WTC11 (cell line): ENCODE measurements at regions of chr19 and their contacts with region 1.

Region 1: GRCh38 chr19:12495002-12495802 is 10.6 kb upstream of the ZNF709 start:
- DNase-seq: peak; percentile 94
- ATAC-seq: peak; percentile 99
- H3K4me3 Mint-ChIP-seq: peak overlapping the region; percentile 76
- H3K27ac Mint-ChIP-seq: peak overlapping the region; percentile 95
- H3K4me1 Mint-ChIP-seq: peaks cover 7% of the 10 kb centered on the region
- H3K27me3 Mint-ChIP-seq: peaks cover 7% of the 10 kb centered on the region
- CTCF ChIP-seq: no peak

Region 2: GRCh38 chr19:12484371-12485051 is 10.7 kb before region 1 on chr19 and contains the start of gene ZNF709:
- CTCF ChIA-PET with region 1: interaction called, 4 read pairs
- POLR2A ChIA-PET with region 1: interaction called, 15 read pairs
- DNase-seq: peak; percentile 97
- ATAC-seq: peak; percentile 98
- H3K4me3 Mint-ChIP-seq: peak within 1 kb of the TSS; percentile 89
- H3K27ac Mint-ChIP-seq: no peak within 1 kb of the TSS; the same call in 1 of the 2 replicates
- H3K4me1 Mint-ChIP-seq: peaks cover 16% of the 10 kb centered on the region
- H3K27me3 Mint-ChIP-seq: peaks cover 14% of the 10 kb centered on the region
- CTCF ChIP-seq: no peak
- total RNA-seq, gene ZNF709: 3.0 to 3.8 TPM (median 3.4 TPM) in 3 replicates

Region 3: DNA sequence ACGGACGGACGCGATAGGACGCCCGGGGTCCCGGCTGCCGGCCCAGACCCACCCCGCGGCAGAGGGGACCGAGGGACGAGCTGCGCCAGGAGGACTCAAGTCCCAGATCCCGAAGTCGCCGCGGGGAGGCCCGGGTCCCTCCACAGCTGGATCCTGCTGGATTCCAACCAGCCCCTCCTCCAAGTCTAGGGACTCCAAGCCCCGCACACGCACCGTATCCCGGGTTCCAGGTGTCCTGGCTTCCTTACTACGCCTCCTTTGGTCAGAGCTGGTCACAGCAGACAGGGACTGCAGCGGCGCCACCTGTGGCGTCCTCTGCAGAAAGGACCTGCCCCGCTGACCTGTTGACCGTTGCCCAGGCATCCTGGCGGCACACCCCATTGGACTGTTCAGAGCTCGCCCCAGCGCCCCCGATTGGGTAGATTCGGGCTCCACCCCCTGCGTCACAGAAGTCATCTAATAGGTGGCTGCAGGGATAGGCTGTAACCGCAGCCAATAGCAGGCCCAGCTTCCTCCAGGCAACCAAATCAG is 18.4 kb after region 1 on chr19:
- CTCF ChIA-PET with region 1: interaction called, 26 read pairs
- POLR2A ChIA-PET with region 1: interaction called, 3 read pairs
- DNase-seq: peak; percentile 75
- ATAC-seq: peak; percentile 89
- H3K4me3 Mint-ChIP-seq: peak overlapping the region; percentile 47
- H3K27ac Mint-ChIP-seq: no peak overlapping the region
- H3K4me1 Mint-ChIP-seq: no peaks in the 10 kb centered on the region
- H3K27me3 Mint-ChIP-seq: no peaks in the 10 kb centered on the region
- CTCF ChIP-seq: no peak; the same call in 1 of the 2 replicates